ENCODE measurements at regions of chr7 and their contacts with region 1.

Region 1: GRCh38 chr7:44847508-44847920 is 373 bp downstream of the H2AZ2 start:
- DNase-seq: peak; percentile 78 to 94 (median 88)
- ATAC-seq: peak; percentile 63 to 65
- H3K4me3 Mint-ChIP-seq: peak overlapping the region; percentile 87 to 98 (median 94)
- H3K27ac Mint-ChIP-seq: peak overlapping the region; percentile 94 to 99 (median 98)
- H3K4me1 Mint-ChIP-seq: peaks cover 16 to 48% (median 37%) of the 10 kb centered on the region in 4 donors
- H3K27me3 Mint-ChIP-seq: peaks cover 0 to 3% (median 0%) of the 10 kb centered on the region in 5 donors

Region 2: DNA sequence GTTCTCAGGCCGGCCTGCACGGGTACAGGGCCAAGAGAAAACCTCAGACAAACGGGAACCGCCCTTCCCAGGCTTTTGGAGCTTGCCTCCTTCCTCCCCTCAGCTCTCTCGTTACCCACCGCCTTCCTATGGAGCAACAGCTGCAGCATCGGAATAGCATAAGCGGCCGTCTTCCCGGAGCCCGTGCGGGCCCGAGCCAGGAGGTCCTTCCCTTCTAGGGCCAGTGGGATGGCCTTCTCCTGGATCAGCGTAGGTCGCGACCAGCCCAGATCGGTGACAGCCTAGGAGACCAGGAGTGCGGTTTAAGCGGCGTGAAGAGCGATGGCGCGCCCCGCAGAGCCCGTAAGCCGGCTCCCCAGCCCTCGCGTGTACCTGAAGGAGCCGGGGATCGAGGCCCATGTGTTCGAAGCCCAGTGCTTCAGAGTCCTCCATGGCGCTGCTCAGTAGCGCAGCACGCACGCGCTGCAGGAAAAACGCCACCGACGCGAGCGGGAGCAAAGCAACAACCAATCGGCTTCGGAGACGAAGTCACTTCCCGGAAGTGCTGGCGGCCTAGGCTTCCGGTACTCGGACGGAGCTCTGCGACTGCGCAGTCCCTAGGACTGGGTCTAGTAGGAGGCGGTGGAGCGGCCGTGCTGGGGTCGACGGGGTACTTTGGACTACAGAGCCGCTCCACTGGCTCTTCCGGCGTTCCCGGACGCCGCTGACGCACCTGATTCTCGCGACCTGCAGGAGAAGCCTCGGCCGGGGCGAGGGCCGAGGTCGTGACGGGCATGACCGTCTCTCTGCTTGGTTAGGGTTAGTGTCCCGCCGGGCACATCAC is 273.8 kb before region 1 on chr7 and contains the start of gene DDX56:
- POLR2A ChIA-PET with region 1: interaction called, 11 read pairs
- DNase-seq: peak; percentile 82 to 96 (median 89)
- ATAC-seq: peak; percentile 96 to 98
- H3K4me3 Mint-ChIP-seq: peak within 1 kb of the TSS; percentile 90 to 97 (median 96)
- H3K27ac Mint-ChIP-seq: peak within 1 kb of the TSS; percentile 96 to 99 (median 98)
- H3K4me1 Mint-ChIP-seq: peaks cover 21 to 49% (median 34%) of the 10 kb centered on the region in 4 donors
- H3K27me3 Mint-ChIP-seq: no peaks in the 10 kb centered on the region
- polyA plus RNA-seq, gene DDX56: 25.3 to 48.2 (median 41.1) TPM

Region 3: DNA sequence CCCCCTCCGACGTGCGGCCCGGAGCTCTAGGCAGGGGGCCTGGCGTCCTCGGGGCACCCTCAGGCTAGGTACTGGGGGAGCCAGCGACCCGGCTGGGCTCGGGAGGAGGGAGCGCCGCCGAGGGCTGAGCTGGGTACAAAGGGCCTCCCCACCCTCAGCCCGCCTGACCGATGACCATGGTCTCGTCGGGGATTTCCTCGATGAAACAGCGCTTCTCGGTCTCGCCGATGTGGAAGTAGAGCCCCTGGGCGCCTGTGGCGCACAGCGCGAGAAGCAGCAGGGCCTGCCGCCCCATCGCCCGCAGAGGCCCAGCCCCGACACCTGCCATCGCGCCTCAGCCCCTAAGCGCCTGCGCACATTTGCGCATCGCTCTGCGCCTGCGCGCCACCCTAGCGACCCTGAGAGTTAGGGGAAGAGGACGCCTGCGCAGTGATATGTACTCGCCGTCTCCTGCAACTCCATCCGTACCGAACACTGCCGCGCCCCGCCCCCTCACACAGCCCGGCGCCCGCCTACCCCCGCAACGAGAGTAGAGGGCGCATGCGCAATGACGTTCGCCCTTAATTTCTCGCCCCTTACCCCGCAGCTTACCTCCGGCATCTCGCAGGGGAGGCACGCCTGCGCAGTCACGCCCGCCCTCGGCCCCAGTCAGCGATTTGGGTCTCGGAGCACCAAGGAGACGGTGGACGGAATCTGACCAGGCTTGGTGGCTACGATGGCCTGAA is 265.5 kb before region 1 on chr7 and contains the start of gene TMED4:
- POLR2A ChIA-PET with region 1: interaction called, 32 read pairs
- DNase-seq: peak; percentile 99 to 100 (median 100)
- ATAC-seq: peak; percentile 84 to 85
- H3K4me3 Mint-ChIP-seq: peak within 1 kb of the TSS; percentile 87 to 93 (median 91)
- H3K27ac Mint-ChIP-seq: peak within 1 kb of the TSS; percentile 91 to 99 (median 98)
- H3K4me1 Mint-ChIP-seq: peaks cover 14 to 37% (median 35%) of the 10 kb centered on the region in 4 donors
- H3K27me3 Mint-ChIP-seq: peaks cover 0 to 3% (median 0%) of the 10 kb centered on the region in 5 donors
- polyA plus RNA-seq, gene TMED4: 61.4 to 80.4 (median 71.8) TPM

Region 4: GRCh38 chr7:44748045-44748947 is 99.2 kb before region 1 on chr7 and contains the start of gene ZMIZ2:
- POLR2A ChIA-PET with region 1: interaction called, 10 read pairs
- DNase-seq: peak; percentile 81 to 99 (median 93)
- ATAC-seq: peak; percentile 82 to 85
- H3K4me3 Mint-ChIP-seq: peak within 1 kb of the TSS; percentile 80 to 95 (median 87)
- H3K27ac Mint-ChIP-seq: peak within 1 kb of the TSS; percentile 85 to 97 (median 90)
- H3K4me1 Mint-ChIP-seq: peaks cover 29 to 45% (median 40%) of the 10 kb centered on the region in 4 donors
- H3K27me3 Mint-ChIP-seq: no peaks in the 10 kb centered on the region
- polyA plus RNA-seq, gene ZMIZ2: 2.6 to 8.1 (median 4.9) TPM

Region 5: GRCh38 chr7:44797329-44798251 is 49.9 kb before region 1 on chr7:
- POLR2A ChIA-PET with region 1: interaction called, 26 read pairs
- DNase-seq: peak; percentile 70 to 92 (median 80)
- ATAC-seq: peak; percentile 48 to 59
- H3K4me3 Mint-ChIP-seq: peak overlapping the region; percentile 87 to 100 (median 95)
- H3K27ac Mint-ChIP-seq: peak overlapping the region; percentile 90 to 99 (median 98)
- H3K4me1 Mint-ChIP-seq: peaks cover 15 to 47% (median 45%) of the 10 kb centered on the region in 4 donors
- H3K27me3 Mint-ChIP-seq: no peaks in the 10 kb centered on the region

Region 6: GRCh38 chr7:45252857-45253256 is 405.3 kb after region 1 on chr7:
- POLR2A ChIA-PET with region 1: no interaction called
- DNase-seq: no peak
- ATAC-seq: no peak
- H3K4me3 Mint-ChIP-seq: no peak overlapping the region
- H3K27ac Mint-ChIP-seq: no peak overlapping the region
- H3K4me1 Mint-ChIP-seq: no peaks in the 10 kb centered on the region
- H3K27me3 Mint-ChIP-seq: peaks cover 13 to 57% (median 30%) of the 10 kb centered on the region in 5 donors